Left cardiac atrium (tissue), 4 donors: ENCODE measurements at regions of chr1 and their contacts with region 1.

Region 1: GRCh38 chr1:113140588-113141446 is 67.8 kb downstream of the LRIG2 start:
- DNase-seq: peak; percentile 61
- ATAC-seq: peak; percentile 88 to 91

Region 2: DNA sequence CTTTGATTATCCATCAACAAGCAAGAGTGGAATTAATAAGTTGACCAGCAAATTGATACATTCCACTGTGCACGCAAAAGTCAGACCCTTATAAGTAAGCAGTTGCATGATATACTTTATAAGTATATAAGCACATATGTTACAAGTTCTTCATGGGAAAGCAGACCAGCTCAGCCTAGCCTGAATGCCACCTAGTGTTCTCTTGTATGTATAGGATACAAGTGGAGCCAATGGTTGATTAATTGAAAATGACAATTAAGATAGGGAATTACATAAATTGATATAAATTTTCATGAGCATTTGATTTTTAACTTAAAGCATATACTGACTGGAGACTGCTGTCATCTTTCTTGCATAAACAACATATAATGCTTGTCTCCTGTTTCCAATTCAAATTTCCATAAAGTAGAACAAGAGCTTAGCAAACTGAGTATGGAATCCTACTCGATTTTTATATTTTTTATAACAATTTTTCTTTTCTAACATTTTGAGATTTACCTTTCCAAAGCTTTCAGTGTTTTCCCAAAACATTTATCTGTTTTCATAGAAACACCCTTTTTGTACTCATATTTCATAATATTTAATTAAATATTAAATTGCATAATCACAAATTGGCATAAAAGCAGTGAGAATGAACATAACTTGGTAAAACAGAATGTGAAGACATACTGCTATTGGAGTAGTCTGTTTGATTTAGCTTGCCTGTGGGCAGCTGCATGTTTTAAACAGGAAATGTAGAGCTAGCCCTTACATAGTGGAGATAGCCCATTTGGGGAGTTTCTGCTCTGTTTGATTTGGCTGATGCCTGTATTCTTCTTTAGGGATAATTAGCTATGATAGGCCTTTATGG is 312.3 kb after region 1 on chr1:
- intact Hi-C with region 1: loop called in 1 of 2 experiments (anchors 5 kb)
- DNase-seq: peak; percentile 19
- ATAC-seq: peak; percentile 79 to 80

Region 3: GRCh38 chr1:113677250-113678158 is 536.7 kb after region 1 on chr1:
- intact Hi-C with region 1: loop called (anchors 1 to 5 kb)
- DNase-seq: peak; percentile 25
- ATAC-seq: peak in 1 of 2 donors; percentile 50